Activated T-helper 1 cell treated with anti-CD3 and anti-CD28 coated beads, Interleukin-12 subunit alpha, Interleukin-12 subunit beta, Interleukin-2, Interleukin-4 antibody, amounts not matched to agents 30 ng/mL and 10 ng/mL and 1 ng/mL, durations not matched to agents 14 hours and 24 hours and 36 hours (primary cell): ENCODE measurements at regions of chr1 and their contacts with region 1.

Region 1: GRCh38 chr1:207499573-207499972 is 3.6 kb downstream of the CR1 start:
- DNase-seq: peak; percentile 46
- H3K4me3 Mint-ChIP-seq: no peak overlapping the region
- H3K27ac Mint-ChIP-seq: no peak overlapping the region
- H3K4me1 Mint-ChIP-seq: peaks cover 12% of the 10 kb centered on the region
- H3K27me3 Mint-ChIP-seq: peaks cover 42% of the 10 kb centered on the region

Region 2: DNA sequence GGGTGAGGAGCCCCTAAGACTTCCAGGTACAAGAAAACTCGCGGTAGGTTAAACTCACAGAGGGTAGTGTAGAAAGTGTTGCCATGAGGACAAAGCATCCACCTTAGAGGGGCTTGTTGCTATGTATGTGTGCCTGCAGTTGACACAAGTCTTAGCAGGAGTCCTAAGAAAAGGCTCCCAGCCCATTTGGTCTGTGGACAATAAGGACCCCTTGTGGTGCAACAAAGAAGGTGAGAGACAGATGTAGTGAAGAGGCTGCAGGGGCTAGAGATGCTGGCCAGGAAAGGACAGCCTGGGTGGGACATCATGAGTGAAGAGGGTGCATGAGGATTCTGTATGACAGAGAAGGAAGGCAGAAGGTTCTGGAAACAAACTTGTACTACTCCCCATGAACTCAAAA is 691.0 kb before region 1 on chr1:
- intact Hi-C with region 1: loop called (anchors 2 kb)
- DNase-seq: peak; percentile 43
- H3K4me3 Mint-ChIP-seq: no peak overlapping the region
- H3K27ac Mint-ChIP-seq: peak overlapping the region; percentile 15
- H3K4me1 Mint-ChIP-seq: peaks cover 57% of the 10 kb centered on the region
- H3K27me3 Mint-ChIP-seq: peaks cover 13% of the 10 kb centered on the region

Region 3: GRCh38 chr1:206925106-206925736 is 574.4 kb before region 1 on chr1:
- intact Hi-C with region 1: loop called (anchors 5 kb)
- DNase-seq: peak; percentile 36
- H3K4me3 Mint-ChIP-seq: no peak overlapping the region
- H3K27ac Mint-ChIP-seq: no peak overlapping the region
- H3K4me1 Mint-ChIP-seq: peaks cover 13% of the 10 kb centered on the region
- H3K27me3 Mint-ChIP-seq: no peaks in the 10 kb centered on the region

Region 4: DNA sequence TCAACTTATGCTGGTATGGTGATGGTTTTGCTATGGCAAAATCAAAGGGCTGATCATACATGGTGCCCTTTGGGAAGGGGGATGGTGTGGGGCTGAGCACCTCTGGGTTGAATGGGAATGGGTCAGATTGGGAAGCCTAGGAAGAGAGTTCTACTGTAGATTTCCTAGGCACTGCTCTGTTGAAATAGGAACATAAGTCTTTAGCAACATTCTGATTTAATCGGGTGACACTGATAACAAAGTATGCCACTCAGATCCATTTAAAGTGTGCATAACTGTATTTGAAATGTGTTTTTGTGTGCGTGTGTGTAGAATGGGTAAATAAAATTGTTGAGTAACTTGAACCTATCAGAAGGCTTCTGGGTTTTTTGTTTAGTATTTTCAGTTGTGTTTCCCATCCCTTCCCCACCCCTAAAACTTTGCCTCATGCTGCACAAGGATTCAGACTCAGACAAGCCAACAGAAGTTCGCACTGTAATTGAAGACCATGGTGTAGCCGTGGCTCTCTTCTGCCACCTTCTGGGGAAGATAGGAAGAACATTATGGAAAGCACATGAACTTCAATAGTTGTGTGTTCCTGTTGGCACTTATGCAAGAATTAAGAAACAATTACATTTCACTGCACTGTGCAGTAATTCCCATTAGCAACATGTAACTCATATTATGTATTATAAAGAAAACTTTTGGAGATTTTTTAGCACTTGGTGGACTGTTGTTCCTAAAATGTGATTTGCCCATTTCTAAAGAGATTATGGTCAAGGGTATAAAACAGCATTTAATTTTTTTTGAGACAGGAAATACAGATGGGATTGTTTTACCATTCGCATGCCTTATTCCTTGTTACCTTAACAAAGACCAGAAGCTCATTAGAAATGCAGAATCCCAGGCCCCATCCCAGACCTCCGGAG is 421.8 kb before region 1 on chr1:
- intact Hi-C with region 1: loop called (anchors 1 kb)
- DNase-seq: peak; percentile 60
- H3K4me3 Mint-ChIP-seq: no peak overlapping the region
- H3K27ac Mint-ChIP-seq: no peak overlapping the region
- H3K4me1 Mint-ChIP-seq: no peaks in the 10 kb centered on the region
- H3K27me3 Mint-ChIP-seq: peaks cover 19% of the 10 kb centered on the region

Region 5: DNA sequence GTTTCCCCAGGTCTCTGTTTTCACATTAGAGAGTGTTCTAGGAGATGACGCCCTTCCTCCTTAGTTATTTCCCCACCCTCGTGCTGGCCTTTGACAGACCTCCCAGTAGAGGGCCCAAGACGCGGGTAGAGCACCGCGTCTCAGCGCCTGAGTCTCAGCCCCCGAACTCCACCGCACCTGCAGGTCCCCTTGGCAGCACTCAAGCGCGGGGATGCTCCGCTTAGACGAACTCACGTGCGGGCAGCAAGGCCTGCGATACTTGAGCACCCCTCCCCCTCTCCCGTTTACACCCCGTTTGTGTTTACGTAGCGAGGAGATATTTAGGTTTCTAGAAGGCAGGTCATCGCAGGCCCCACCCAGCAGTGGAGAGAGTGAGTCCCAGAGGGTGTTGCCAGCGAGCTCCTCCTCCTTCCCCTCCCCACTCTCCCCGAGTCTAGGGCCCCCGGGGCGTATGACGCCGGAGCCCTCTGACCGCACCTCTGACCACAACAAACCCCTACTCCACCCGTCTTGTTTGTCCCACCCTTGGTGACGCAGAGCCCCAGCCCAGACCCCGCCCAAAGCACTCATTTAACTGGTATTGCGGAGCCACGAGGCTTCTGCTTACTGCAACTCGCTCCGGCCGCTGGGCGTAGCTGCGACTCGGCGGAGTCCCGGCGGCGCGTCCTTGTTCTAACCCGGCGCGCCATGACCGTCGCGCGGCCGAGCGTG is 178.3 kb before region 1 on chr1 and contains the start of gene CD55:
- intact Hi-C with region 1: loop called (anchors 1 kb)
- DNase-seq: peak; percentile 99
- H3K4me3 Mint-ChIP-seq: peak within 1 kb of the TSS; percentile 88
- H3K27ac Mint-ChIP-seq: peak within 1 kb of the TSS; percentile 99
- H3K4me1 Mint-ChIP-seq: peaks cover 33% of the 10 kb centered on the region
- H3K27me3 Mint-ChIP-seq: peaks cover 2% of the 10 kb centered on the region
- total RNA-seq, gene CD55: 177 and 178 TPM in 2 replicates

Region 6: GRCh38 chr1:207404849-207405525 is 94.6 kb before region 1 on chr1:
- intact Hi-C with region 1: loop called (anchors 1 kb)
- DNase-seq: no peak
- H3K4me3 Mint-ChIP-seq: no peak overlapping the region
- H3K27ac Mint-ChIP-seq: no peak overlapping the region
- H3K4me1 Mint-ChIP-seq: peaks cover 21% of the 10 kb centered on the region
- H3K27me3 Mint-ChIP-seq: peaks cover 2% of the 10 kb centered on the region

Region 7: DNA sequence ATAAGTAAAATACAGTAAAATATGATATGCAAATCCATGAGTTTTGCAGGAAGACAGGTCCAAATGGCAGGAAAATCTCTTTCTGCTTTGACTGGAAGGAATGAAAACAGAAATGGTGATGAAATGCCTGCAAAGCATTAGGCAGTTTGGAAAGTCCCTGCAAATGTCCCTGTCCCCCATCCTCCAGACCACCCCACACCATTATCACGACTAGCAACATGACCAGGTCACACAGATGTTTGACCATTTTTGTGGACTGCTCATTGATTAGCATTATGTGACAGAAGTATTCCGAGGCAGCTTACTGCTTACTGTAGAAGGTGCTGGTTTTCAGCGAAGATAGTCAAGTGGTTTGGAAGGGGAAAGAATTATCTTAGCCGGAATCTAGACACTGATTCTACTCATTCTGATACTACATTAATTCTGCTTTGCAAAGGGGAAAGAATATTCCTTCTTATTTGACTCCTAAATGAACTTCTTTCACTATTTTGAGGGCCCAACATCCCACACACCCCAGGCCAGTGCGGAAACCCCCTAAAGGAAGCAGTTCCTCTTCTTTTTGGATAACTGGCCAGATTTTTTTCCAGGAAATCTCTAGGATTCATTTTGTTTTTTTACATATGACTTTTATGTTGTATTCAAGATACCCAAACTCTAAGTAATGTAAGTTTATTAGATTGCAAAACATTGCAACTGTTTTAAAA is 54.9 kb before region 1 on chr1:
- intact Hi-C with region 1: no loop called
- DNase-seq: no peak
- H3K4me3 Mint-ChIP-seq: no peak overlapping the region
- H3K27ac Mint-ChIP-seq: no peak overlapping the region
- H3K4me1 Mint-ChIP-seq: no peaks in the 10 kb centered on the region
- H3K27me3 Mint-ChIP-seq: peaks cover 24% of the 10 kb centered on the region

Region 8: DNA sequence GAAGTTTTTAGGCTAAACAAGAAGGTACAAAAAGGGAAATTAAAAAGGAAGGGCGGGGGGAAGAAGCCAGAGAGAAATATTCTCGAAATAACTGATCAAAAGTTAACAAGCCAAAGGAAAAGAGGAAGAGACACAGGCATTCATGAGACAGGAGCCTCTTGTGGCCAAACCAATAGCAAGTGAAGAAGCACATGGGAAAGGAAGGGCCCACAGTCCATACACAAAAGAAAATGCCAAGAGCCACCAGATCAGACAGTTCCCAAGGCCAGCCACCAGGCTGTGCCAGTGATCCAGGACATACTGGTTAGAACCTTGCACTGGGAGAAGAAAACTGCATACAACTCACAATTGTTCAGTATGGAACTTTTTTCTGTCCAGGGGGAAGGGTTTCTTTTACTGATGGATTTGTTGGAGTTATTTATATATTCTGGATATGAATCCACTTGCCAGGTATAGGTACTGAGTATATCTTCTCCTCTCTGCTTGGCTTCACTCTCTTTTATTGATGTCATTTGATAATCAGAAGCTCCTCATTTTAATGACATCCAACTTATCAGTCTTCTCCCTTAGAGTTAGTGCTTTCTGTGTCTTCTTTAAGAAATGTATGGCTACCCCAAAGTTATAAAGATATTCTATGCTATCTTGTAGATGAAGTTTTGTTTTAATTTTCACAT is 329.0 kb after region 1 on chr1:
- intact Hi-C with region 1: no loop called
- DNase-seq: peak; percentile 36
- H3K4me3 Mint-ChIP-seq: no peak overlapping the region
- H3K27ac Mint-ChIP-seq: peak overlapping the region; percentile 67
- H3K4me1 Mint-ChIP-seq: peaks cover 98% of the 10 kb centered on the region
- H3K27me3 Mint-ChIP-seq: peaks cover 2% of the 10 kb centered on the region